GM10248 (cell line): ENCODE measurements at regions of chr9 and their contacts with region 1.

Region 1: GRCh38 chr9:101119206-101119819 is 90.8 kb downstream of the PLPPR1 start:
- DNase-seq: peak; percentile 37
- CTCF ChIP-seq: peak; percentile 87

Region 2: GRCh38 chr9:101130054-101130453 is 10.7 kb after region 1 on chr9:
- CTCF ChIA-PET with region 1: interaction called, 20 read pairs
- POLR2A ChIA-PET with region 1: no interaction called
- DNase-seq: no peak
- CTCF ChIP-seq: no peak

Region 3: GRCh38 chr9:101235105-101235866 is 116.0 kb after region 1 on chr9:
- CTCF ChIA-PET with region 1: interaction called, 15 read pairs
- POLR2A ChIA-PET with region 1: no interaction called
- DNase-seq: peak; percentile 4
- CTCF ChIP-seq: peak; percentile 37